Activated CD4-positive, alpha-beta T cell treated with anti-CD3 and anti-CD28 coated beads for 36 hours (primary cell): ENCODE measurements at regions of chrX and their contacts with region 1.

Region 1: DNA sequence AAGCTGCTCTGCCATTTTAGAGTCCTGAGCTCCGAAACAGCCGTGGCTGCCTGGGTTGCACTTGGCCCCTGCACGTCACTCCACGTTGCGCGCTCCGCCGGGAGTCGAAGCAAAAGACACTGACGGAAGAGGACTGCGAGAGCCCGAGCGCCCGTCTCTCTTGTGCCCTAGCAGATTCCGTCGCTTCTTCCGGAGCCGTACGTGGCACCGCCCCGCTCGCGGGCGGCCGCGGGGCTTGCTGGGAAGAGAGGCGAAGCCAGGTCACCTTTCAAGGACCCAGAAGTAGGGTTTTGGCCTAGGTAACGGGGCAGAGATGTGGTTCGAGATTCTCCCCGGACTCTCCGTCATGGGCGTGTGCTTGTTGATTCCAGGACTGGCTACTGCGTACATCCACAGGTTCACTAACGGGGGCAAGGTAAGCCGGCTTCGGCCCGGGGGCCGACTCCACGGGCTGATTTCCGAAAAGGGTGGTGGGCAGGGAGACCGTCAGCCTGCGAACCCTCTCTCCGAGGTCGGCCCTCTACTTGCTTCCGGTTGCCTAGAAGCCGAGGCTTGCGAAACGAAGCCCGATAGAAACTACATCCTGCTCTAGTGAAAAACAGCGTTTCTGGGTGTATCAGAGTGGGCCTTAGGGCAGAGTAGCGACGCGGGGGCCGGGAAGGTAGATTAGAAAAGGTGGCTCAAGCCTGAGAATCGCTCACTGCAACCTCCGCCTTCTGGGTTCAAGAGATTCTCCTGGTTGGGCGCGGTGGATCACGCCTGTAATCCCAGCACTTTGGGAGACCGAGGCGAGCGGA is at the starts of genes NDUFA1 and RNF113A:
- DNase-seq: peak; percentile 91
- ATAC-seq: peak; percentile 93
- H3K4me3 Mint-ChIP-seq: peak within 1 kb of the TSS; percentile 100
- H3K27ac Mint-ChIP-seq: peak within 1 kb of the TSS; percentile 99
- H3K4me1 Mint-ChIP-seq: peaks cover 14% of the 10 kb centered on the region
- H3K27me3 Mint-ChIP-seq: no peaks in the 10 kb centered on the region
- total RNA-seq, gene NDUFA1: 37.6 to 101 TPM
- total RNA-seq, gene RNF113A: 26.9 to 29.9 TPM

Region 2: DNA sequence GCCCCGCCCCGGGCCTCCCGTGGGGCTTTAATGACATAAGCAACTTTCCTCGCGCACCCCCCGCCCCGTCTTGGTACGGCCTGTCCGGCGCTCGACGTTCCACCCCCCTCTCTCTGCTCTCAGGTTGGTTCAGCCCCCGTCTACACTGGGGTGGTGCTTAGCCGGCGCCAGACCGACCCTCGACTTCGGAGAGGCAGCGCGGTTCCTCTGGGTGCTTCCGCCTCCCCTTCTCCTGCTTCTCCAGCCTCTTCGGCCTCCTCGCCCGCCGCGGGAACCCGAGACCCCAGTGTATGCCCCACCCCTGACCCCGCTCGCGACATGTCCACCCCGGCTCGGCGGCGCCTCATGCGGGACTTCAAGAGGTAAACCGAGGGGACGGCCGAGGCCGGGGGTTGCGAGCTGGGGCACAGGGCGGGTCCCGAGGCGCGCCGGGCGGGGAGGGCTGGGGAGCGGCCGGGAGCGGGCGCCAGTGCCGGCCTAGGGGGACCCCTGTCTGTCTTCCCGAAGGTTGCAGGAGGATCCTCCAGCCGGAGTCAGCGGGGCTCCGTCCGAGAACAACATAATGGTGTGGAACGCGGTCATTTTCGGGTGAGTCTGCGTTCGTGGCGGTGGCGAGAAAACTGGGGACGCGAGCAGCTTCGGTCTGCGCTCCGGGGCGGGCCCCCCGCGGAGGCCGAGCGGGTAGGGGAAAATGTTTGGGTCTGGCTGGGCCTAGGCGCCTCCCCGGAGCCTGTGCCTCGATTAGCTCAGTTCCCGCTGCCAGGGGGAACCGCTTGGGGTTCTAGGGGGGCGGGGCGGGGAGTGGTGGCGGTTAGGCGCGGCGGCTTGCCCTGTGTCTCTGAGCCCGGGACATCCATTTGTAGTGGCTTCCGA is 297.2 kb before region 1 on chrX and contains the start of gene UBE2A:
- CTCF ChIA-PET with region 1: interaction called, 3 read pairs
- POLR2A ChIA-PET with region 1: no interaction called
- intact Hi-C with region 1: loop called in 1 of 2 experiments (anchors 2 kb)
- DNase-seq: peak; percentile 92
- ATAC-seq: peak; percentile 92
- H3K4me3 Mint-ChIP-seq: peak within 1 kb of the TSS; percentile 94
- H3K27ac Mint-ChIP-seq: peak within 1 kb of the TSS; percentile 87
- H3K4me1 Mint-ChIP-seq: peaks cover 24% of the 10 kb centered on the region
- H3K27me3 Mint-ChIP-seq: no peaks in the 10 kb centered on the region
- total RNA-seq, gene UBE2A: 49.2 to 67.9 TPM

Region 3: GRCh38 chrX:119685225-119686066 is 186.4 kb before region 1 on chrX:
- CTCF ChIA-PET with region 1: no interaction called
- POLR2A ChIA-PET with region 1: interaction called, 3 read pairs
- intact Hi-C with region 1: loop called (anchors 2 to 5 kb)
- DNase-seq: peak; percentile 73
- ATAC-seq: peak; percentile 51
- H3K4me3 Mint-ChIP-seq: peak overlapping the region; percentile 98
- H3K27ac Mint-ChIP-seq: peak overlapping the region; percentile 98
- H3K4me1 Mint-ChIP-seq: peaks cover 54% of the 10 kb centered on the region
- H3K27me3 Mint-ChIP-seq: no peaks in the 10 kb centered on the region

Region 4: GRCh38 chrX:119852382-119853353 is 19.1 kb before region 1 on chrX and contains the start of gene UPF3B:
- CTCF ChIA-PET with region 1: interaction called, 13 read pairs
- POLR2A ChIA-PET with region 1: interaction called, 18 read pairs
- intact Hi-C with region 1: loop called (anchors 1 kb)
- DNase-seq: peak; percentile 96
- ATAC-seq: peak; percentile 98
- H3K4me3 Mint-ChIP-seq: peak within 1 kb of the TSS; percentile 84
- H3K27ac Mint-ChIP-seq: peak within 1 kb of the TSS; percentile 93
- H3K4me1 Mint-ChIP-seq: peaks cover 4% of the 10 kb centered on the region
- H3K27me3 Mint-ChIP-seq: no peaks in the 10 kb centered on the region
- total RNA-seq, gene UPF3B: 18.1 to 21.3 TPM

Region 5: GRCh38 chrX:120514236-120514635 is 642.4 kb after region 1 on chrX:
- CTCF ChIA-PET with region 1: no interaction called
- POLR2A ChIA-PET with region 1: no interaction called
- intact Hi-C with region 1: no loop called
- DNase-seq: no peak
- ATAC-seq: no peak
- H3K4me3 Mint-ChIP-seq: no peak overlapping the region
- H3K27ac Mint-ChIP-seq: no peak overlapping the region
- H3K4me1 Mint-ChIP-seq: no peaks in the 10 kb centered on the region
- H3K27me3 Mint-ChIP-seq: no peaks in the 10 kb centered on the region